OCI-LY7 (cell line): ENCODE measurements at regions of chr2 and their contacts with region 1.

Region 1: GRCh38 chr2:206143451-206143850 is 15.8 kb downstream of the NDUFS1 start:
- DNase-seq: no peak
- H3K4me3 ChIP-seq: no peak overlapping the region
- H3K27ac ChIP-seq: no peak overlapping the region
- H3K4me1 ChIP-seq: no peaks in the 10 kb centered on the region
- CTCF ChIP-seq: no peak

Region 2: DNA sequence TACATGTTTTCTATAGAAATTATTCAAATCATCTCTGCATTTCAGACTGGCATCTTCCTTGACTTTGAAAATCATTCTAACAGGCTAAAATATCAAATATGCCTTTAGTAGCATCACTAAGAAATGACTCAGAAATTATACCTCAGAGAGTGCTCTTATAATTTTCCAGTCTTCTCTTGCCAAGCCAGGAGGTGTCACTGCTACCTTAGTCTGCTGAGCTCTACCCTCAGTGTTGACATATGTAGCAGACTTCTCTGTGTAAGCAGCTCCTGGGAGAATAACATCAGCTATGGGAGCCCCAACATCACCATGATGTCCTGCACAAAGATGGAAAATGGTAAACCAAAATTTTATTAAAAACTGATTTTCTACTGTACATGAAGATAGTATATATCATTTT is 15.8 kb before region 1 on chr2:
- CTCF ChIA-PET with region 1: no interaction called
- POLR2A ChIA-PET with region 1: interaction called, 10 read pairs
- intact Hi-C with region 1: no loop called
- DNase-seq: peak; percentile 26
- H3K4me3 ChIP-seq: no peak overlapping the region
- H3K27ac ChIP-seq: no peak overlapping the region
- H3K4me1 ChIP-seq: no peaks in the 10 kb centered on the region
- CTCF ChIP-seq: peak; percentile 52